Ascending aorta (tissue), 2 donors: ENCODE measurements at regions of chr12 and their contacts with region 1.

Region 1: DNA sequence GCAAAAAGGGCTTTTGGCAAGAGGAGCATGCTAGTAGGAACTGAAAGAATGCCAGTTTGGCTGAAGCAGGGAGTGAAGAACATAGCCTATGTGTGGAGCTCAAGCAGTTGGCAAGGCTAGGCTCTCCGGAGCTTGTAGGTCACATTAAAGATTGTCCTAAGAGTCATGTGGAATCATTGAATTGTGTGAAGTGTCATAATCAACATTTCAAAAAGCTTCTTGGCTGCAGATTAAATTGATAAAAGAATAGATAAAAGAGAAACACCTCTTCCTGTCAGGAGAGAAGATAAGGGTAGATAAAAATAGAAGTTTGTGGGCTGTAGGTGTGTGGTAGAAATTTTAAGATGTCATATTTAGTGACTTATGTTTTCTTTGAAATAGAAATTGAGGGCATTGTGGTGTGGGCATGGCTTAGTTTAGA is 36.1 kb downstream of the CPSF6 start:
- DNase-seq: no peak
- H3K4me3 ChIP-seq: no peak overlapping the region
- H3K27ac ChIP-seq: no peak overlapping the region
- H3K4me1 ChIP-seq: no peaks in the 10 kb centered on the region
- H3K27me3 ChIP-seq: no peaks in the 10 kb centered on the region
- CTCF ChIP-seq: no peak

Region 2: DNA sequence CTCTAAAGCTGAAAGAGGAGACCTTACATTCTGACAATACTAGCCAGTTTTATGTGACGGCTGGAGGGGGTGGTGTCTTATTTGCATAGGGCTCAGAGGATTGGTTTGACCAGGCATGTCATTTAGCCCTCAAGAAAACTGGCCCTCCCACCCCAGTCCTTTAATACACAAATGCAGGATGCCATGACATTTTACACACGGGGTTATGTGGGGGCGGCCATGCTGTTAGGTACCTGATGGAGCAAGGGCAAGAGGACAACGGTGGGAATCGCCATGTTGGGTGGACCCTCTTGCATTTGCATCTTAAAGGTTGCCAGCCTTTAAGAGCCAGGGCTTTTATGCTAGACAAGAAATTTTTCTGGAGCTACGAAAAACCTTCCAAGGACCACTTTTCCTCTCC is 444.2 kb before region 1 on chr12:
- intact Hi-C with region 1: loop called (anchors 10 kb)
- DNase-seq: no peak
- H3K4me3 ChIP-seq: no peak overlapping the region
- H3K27ac ChIP-seq: no peak overlapping the region
- H3K4me1 ChIP-seq: no peaks in the 10 kb centered on the region
- H3K27me3 ChIP-seq: no peaks in the 10 kb centered on the region
- CTCF ChIP-seq: no peak